Esophagus squamous epithelium (tissue), 5 donors: ENCODE measurements at regions of chr17 and their contacts with region 1.

Region 1: DNA sequence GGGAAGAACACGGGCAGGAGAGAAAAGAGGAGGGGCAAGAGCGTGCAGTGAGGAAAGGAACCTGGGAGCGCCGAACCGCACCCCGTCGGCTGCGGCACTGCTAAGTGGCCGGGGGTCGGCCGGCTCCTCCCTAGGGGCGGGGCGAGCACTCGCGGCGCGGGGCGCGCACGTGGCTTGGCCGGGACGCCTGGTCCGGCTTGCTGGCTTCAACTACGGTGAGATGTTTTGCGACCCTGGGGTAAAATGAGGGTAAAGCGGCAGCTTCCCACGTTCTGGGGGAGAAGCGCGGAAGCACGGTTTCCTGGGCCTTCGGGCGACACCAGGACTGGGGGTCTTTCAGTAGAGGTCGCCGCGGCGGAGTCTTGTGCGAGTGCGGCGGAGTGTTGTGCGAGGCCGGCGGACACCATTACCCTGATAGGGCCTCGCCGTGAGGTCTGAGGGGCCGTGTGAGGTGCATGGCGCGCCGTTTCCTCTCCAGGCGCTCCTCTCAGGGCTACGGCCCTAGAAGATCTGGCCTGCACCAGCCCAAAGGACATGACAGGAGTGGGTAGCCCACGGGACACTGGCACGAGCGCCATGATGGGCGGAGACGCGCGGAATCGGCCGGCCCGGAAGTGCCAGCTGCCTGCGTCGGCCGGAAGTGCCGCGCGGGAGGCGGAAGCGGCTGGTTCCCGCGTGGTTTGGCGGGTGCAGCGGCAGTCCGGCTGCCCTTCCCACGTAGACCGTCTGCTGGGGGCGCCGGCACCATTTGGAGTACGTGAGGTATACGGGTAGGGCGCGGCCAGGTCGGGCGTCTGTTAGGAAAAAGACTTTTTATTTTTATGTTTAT is at the starts of genes MYO19 and PIGW:
- DNase-seq: peak; percentile 53
- H3K4me3 ChIP-seq: peak within 1 kb of the TSS; percentile 82 to 94 (median 94)
- H3K27ac ChIP-seq: peak within 1 kb of the TSS; percentile 97 to 100 (median 98)
- H3K4me1 ChIP-seq: peaks cover 12 to 36% (median 12%) of the 10 kb centered on the region in 3 donors
- H3K27me3 ChIP-seq: no peaks in the 10 kb centered on the region
- CTCF ChIP-seq: peak in 1 of 6 experiments; percentile 16
- POLR2A ChIP-seq: peak in 3 of 4 donors; percentile 65 to 90 (median 75)
- total RNA-seq, gene MYO19: 46.4 to 124 (median 88.5) TPM
- total RNA-seq, gene PIGW: 6.9 to 11.0 (median 9.0) TPM

Region 2: GRCh38 chr17:36486204-36487194 is 48.6 kb before region 1 on chr17 and contains the start of gene ZNHIT3:
- intact Hi-C with region 1: loop called (anchors 5 kb)
- DNase-seq: peak; percentile 44
- H3K4me3 ChIP-seq: peak within 1 kb of the TSS; percentile 69 to 100 (median 93)
- H3K27ac ChIP-seq: peak within 1 kb of the TSS; percentile 84 to 93 (median 89)
- H3K4me1 ChIP-seq: peaks cover 18 to 63% (median 29%) of the 10 kb centered on the region in 3 donors
- H3K27me3 ChIP-seq: peaks cover 0 to 13% (median 0%) of the 10 kb centered on the region in 4 donors
- CTCF ChIP-seq: peak in 1 of 6 experiments; percentile 36
- POLR2A ChIP-seq: peak in 3 of 4 donors; percentile 15 to 64 (median 50)
- total RNA-seq, gene ZNHIT3: 13.8 to 38.6 (median 29.2) TPM

Region 3: DNA sequence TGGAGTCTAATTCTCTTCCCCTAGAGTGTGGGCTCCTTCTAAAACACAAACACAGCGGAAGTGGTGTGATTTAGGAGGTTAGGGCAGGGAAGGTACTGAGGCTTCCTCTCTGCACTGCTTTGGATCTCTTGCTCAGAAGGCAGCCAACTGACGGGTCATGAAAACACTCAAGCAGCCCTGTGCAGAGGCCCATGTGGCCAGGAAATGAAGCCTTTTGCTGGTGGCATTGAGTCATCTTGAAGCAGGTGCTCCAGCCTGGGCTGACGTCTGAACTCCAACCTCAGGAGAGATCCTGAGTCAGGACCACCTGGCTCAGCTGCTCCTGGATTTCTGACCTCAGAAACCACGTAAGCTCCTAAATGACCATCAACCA is 139.2 kb after region 1 on chr17:
- intact Hi-C with region 1: no loop called
- DNase-seq: no peak
- H3K4me3 ChIP-seq: no peak overlapping the region
- H3K27ac ChIP-seq: no peak overlapping the region
- H3K4me1 ChIP-seq: no peaks in the 10 kb centered on the region
- H3K27me3 ChIP-seq: peaks cover 0 to 4% (median 0%) of the 10 kb centered on the region in 4 donors
- CTCF ChIP-seq: no peak
- POLR2A ChIP-seq: no peak

Region 4: GRCh38 chr17:37273409-37274051 is 738.5 kb after region 1 on chr17:
- intact Hi-C with region 1: no loop called
- DNase-seq: no peak
- H3K4me3 ChIP-seq: no peak overlapping the region
- H3K27ac ChIP-seq: peak overlapping the region in 2 of 4 donors; percentile 13 to 47
- H3K4me1 ChIP-seq: peaks cover 0 to 32% (median 0%) of the 10 kb centered on the region in 3 donors
- H3K27me3 ChIP-seq: no peaks in the 10 kb centered on the region
- CTCF ChIP-seq: no peak
- POLR2A ChIP-seq: no peak